Naive thymus-derived CD4-positive, alpha-beta T cell (primary cell): ENCODE measurements at regions of chr6 and their contacts with region 1.

Region 1: DNA sequence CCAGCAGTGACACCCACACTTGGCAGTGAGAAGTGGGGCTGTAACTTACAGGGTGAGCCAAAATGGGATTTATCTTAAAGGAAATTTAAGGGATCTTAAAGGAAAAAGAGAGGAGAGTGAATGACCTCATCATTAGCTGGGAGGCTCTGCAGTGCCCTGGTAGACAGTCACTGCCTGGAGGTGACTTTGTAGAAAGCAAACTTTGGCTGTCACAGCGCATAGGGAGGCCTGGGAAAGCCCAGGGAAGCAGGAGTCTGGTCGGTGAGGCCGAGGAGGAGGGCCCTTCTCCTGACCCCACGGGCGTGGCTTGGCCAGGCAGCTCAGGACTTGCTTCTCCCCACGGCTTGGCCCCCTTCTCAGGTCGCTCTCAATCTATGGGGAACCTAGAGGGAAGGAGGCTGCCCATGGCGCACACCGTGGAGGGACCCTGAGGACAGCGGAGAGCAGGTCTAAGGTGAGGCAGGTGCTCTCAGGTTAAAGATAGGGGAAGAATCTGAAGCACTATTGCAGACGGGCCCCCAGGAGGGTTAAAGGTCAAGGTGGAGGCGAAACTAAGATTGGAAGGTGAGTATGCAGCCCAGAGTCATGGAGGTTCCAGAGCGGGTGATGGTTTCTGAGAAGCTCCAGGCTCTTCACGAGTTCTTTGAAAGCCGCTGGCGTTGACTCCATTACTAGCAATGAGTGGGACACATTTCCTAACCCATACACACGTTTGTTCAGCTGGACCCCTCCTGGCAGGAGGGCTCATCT is 15.6 kb upstream of the RIPK1 start:
- DNase-seq: no peak
- ATAC-seq: no peak
- H3K4me3 ChIP-seq: peak overlapping the region; percentile 64
- H3K4me3 Mint-ChIP-seq: peak overlapping the region; percentile 70 to 83 (median 76)
- H3K27ac ChIP-seq: no peak overlapping the region
- H3K27ac Mint-ChIP-seq: peak overlapping the region; percentile 52 to 84 (median 69)
- H3K4me1 ChIP-seq: peaks cover 5% of the 10 kb centered on the region in 2 donors
- H3K4me1 Mint-ChIP-seq: peaks cover 7 to 36% (median 17%) of the 10 kb centered on the region in 7 donors
- H3K27me3 ChIP-seq: no peaks in the 10 kb centered on the region
- H3K27me3 Mint-ChIP-seq: peaks cover 0 to 23% (median 0%) of the 10 kb centered on the region in 5 donors

Region 2: GRCh38 chr6:2791124-2791974 is 261.3 kb before region 1 on chr6:
- CTCF ChIA-PET with region 1: interaction called, 4 read pairs
- POLR2A ChIA-PET with region 1: no interaction called
- intact Hi-C with region 1: loop called in 1 of 2 experiments (anchors 2 kb)
- DNase-seq: peak in 8 of 9 donors; percentile 10 to 61 (median 53)
- ATAC-seq: peak; percentile 73
- H3K4me3 ChIP-seq: no peak overlapping the region
- H3K4me3 Mint-ChIP-seq: peak overlapping the region in 8 of 10 donors; percentile 12 to 71 (median 56)
- H3K27ac ChIP-seq: no peak overlapping the region
- H3K27ac Mint-ChIP-seq: peak overlapping the region; percentile 29 to 90 (median 81)
- H3K4me1 ChIP-seq: peaks cover 15 to 19% of the 10 kb centered on the region in 2 donors
- H3K4me1 Mint-ChIP-seq: peaks cover 29 to 44% (median 36%) of the 10 kb centered on the region in 7 donors
- H3K27me3 ChIP-seq: no peaks in the 10 kb centered on the region
- H3K27me3 Mint-ChIP-seq: no peaks in the 10 kb centered on the region

Region 3: GRCh38 chr6:3023663-3024483 is 28.8 kb before region 1 on chr6:
- CTCF ChIA-PET with region 1: interaction called, 7 read pairs
- POLR2A ChIA-PET with region 1: interaction called, 17 read pairs
- intact Hi-C with region 1: loop called (anchors 1 kb)
- DNase-seq: peak; percentile 57 to 89 (median 72)
- ATAC-seq: peak; percentile 90
- H3K4me3 ChIP-seq: peak overlapping the region; percentile 69
- H3K4me3 Mint-ChIP-seq: peak overlapping the region; percentile 80 to 94 (median 88)
- H3K27ac ChIP-seq: peak overlapping the region; percentile 18
- H3K27ac Mint-ChIP-seq: peak overlapping the region in 8 of 9 donors; percentile 58 to 98 (median 82)
- H3K4me1 ChIP-seq: peaks cover 29 to 38% of the 10 kb centered on the region in 2 donors
- H3K4me1 Mint-ChIP-seq: peaks cover 23 to 56% (median 43%) of the 10 kb centered on the region in 7 donors
- H3K27me3 ChIP-seq: no peaks in the 10 kb centered on the region
- H3K27me3 Mint-ChIP-seq: peaks cover 0 to 1% (median 0%) of the 10 kb centered on the region in 5 donors

Region 4: GRCh38 chr6:3031857-3032640 is 20.6 kb before region 1 on chr6:
- CTCF ChIA-PET with region 1: interaction called, 7 read pairs
- POLR2A ChIA-PET with region 1: interaction called, 17 read pairs
- intact Hi-C with region 1: loop called in 1 of 2 experiments (anchors 1 kb)
- DNase-seq: peak in 4 of 9 donors; percentile 18 to 43 (median 36)
- ATAC-seq: peak; percentile 61
- H3K4me3 ChIP-seq: no peak overlapping the region
- H3K4me3 Mint-ChIP-seq: no peak overlapping the region
- H3K27ac ChIP-seq: no peak overlapping the region
- H3K27ac Mint-ChIP-seq: no peak overlapping the region
- H3K4me1 ChIP-seq: peaks cover 5% of the 10 kb centered on the region in 2 donors
- H3K4me1 Mint-ChIP-seq: peaks cover 3 to 25% (median 14%) of the 10 kb centered on the region in 7 donors
- H3K27me3 ChIP-seq: no peaks in the 10 kb centered on the region
- H3K27me3 Mint-ChIP-seq: peaks cover 0 to 47% (median 0%) of the 10 kb centered on the region in 5 donors